ENCODE measurements at regions of chr5 and their contacts with region 1.

Region 1: GRCh38 chr5:149035372-149035790 is 27.5 kb downstream of the SH3TC2 start:
- DNase-seq: peak; percentile 70 to 82
- H3K4me3 ChIP-seq: no peak overlapping the region
- H3K4me3 Mint-ChIP-seq: no peak overlapping the region
- H3K27ac Mint-ChIP-seq: no peak overlapping the region
- H3K4me1 ChIP-seq: no peaks in the 10 kb centered on the region
- H3K4me1 Mint-ChIP-seq: no peaks in the 10 kb centered on the region
- H3K27me3 ChIP-seq: no peaks in the 10 kb centered on the region
- H3K27me3 Mint-ChIP-seq: peaks cover 3% of the 10 kb centered on the region
- CTCF ChIP-seq: peak; percentile 75 to 94

Region 2: DNA sequence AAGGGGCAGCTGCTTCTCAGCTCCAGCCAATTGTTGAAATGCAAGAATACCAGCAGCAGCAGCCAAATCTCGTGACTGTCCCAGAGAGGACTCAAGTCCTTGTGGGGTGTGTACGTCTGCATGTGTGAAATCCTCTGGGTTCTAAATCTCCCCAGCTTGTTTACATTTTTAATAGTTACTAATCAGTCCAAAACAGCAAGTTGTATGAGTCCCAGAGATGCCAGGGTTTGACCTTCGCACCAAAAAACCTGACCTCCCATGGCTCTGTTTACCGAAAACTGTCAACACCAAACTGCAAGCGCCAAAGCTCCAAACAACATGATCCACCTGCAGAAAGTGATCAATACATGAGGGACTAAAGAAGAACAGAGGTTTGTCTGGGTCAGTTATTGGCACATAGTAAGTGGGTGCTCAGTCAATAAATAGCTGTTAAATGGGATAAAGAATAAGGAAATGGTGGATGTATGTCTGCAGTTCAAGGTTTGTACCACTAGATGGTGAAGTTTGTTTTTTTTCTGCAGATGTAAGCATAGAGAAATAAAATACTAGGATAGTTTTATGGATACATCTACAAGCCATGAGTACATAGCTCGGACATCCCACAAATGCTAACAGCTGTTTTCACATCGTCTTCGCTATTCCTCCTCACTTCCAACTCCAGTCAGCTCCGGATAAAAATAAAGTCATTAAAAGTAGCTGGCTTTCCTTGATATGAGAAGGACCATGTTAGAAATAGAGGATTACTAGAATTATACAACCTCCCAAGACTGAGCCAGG is 294.2 kb before region 1 on chr5:
- CTCF ChIA-PET with region 1: interaction called, 19 read pairs
- POLR2A ChIA-PET with region 1: no interaction called
- intact Hi-C with region 1: loop called (anchors 1 kb)
- DNase-seq: peak in 1 of 2 experiments; percentile 45
- H3K4me3 ChIP-seq: no peak overlapping the region
- H3K4me3 Mint-ChIP-seq: no peak overlapping the region
- H3K27ac Mint-ChIP-seq: no peak overlapping the region
- H3K4me1 ChIP-seq: no peaks in the 10 kb centered on the region
- H3K4me1 Mint-ChIP-seq: no peaks in the 10 kb centered on the region
- H3K27me3 ChIP-seq: no peaks in the 10 kb centered on the region
- H3K27me3 Mint-ChIP-seq: peaks cover 11% of the 10 kb centered on the region
- CTCF ChIP-seq: peak; percentile 64 to 67

Region 3: DNA sequence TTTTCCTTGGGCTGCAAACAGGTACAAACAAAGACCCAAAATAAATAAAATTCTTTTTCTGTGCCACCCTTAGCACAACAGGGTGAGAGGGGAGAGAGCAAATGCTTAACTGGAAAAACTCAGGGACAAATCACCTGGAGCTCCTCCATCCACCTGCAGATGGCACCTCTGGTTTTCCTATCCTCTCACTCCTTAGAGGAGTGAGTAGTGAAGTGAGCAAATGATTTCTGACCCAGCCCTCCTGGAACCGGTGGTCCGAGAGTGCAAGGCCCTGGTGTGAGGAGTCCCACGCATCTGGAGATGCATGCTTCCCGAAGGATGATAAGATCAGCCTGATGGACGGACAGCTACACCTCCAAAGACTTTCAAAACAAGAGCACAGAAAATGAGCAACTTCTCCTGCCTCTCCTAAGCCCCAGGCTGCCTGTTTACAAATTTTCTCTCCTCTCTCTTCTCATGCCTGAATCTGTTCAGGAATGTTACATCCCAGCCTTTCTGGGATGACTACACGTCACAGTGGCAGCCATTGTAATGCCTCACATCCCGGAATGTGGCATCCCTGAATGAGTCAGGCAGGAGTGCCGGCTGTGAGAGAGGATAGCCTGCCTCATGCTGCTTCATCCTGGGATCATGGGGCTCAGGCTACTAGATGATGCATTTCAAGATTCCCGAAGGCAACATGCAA is 122.5 kb before region 1 on chr5:
- CTCF ChIA-PET with region 1: interaction called, 10 read pairs
- POLR2A ChIA-PET with region 1: no interaction called
- intact Hi-C with region 1: loop called (anchors 1 kb)
- DNase-seq: peak in 1 of 2 experiments; percentile 40
- H3K4me3 ChIP-seq: no peak overlapping the region
- H3K4me3 Mint-ChIP-seq: no peak overlapping the region
- H3K27ac Mint-ChIP-seq: peak overlapping the region; percentile 50
- H3K4me1 ChIP-seq: peaks cover 31% of the 10 kb centered on the region
- H3K4me1 Mint-ChIP-seq: peaks cover 6% of the 10 kb centered on the region
- H3K27me3 ChIP-seq: no peaks in the 10 kb centered on the region
- H3K27me3 Mint-ChIP-seq: peaks cover 3% of the 10 kb centered on the region
- CTCF ChIP-seq: peak; percentile 50 to 65

Region 4: GRCh38 chr5:148957591-148958202 is 77.7 kb before region 1 on chr5:
- CTCF ChIA-PET with region 1: interaction called, 11 read pairs
- POLR2A ChIA-PET with region 1: no interaction called
- intact Hi-C with region 1: loop called (anchors 2 kb)
- DNase-seq: peak; percentile 47 to 61
- H3K4me3 ChIP-seq: no peak overlapping the region
- H3K4me3 Mint-ChIP-seq: no peak overlapping the region
- H3K27ac Mint-ChIP-seq: no peak overlapping the region
- H3K4me1 ChIP-seq: peaks cover 6% of the 10 kb centered on the region; the same call in 1 of the 2 replicates
- H3K4me1 Mint-ChIP-seq: no peaks in the 10 kb centered on the region
- H3K27me3 ChIP-seq: no peaks in the 10 kb centered on the region
- H3K27me3 Mint-ChIP-seq: peaks cover 9% of the 10 kb centered on the region
- CTCF ChIP-seq: peak; percentile 87 to 88

Region 5: DNA sequence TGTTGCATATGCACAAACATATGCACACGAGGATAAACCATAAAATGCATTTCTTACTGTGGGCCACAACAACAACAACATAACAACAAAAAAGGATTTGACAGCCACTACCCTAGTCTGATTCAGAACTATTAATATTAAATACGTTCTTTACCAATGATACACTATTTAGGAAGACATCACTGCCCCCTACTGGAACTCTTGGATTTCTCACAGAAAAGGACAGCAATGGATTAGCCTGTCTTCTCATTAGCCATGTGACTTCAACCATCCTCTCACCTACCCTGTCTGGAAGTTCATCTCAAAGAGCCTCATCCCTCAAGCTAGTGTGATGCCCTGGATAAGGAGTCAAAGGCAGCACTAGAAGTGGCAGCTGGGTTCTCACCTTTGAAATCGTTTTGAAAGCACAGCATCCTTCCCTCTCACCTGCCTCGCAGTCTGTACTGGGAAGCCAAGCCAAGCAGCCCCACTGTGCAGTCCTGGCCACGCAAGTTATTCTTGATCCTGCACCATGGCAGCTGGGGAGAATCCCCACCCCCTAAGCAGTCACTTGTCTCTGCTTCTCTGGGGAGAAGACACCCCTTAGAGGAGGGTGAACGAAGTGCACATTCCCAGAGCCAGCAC is 37.1 kb before region 1 on chr5:
- CTCF ChIA-PET with region 1: interaction called, 5 read pairs
- POLR2A ChIA-PET with region 1: no interaction called
- intact Hi-C with region 1: loop called (anchors 1 kb)
- DNase-seq: peak in 1 of 2 experiments; percentile 36
- H3K4me3 ChIP-seq: no peak overlapping the region
- H3K4me3 Mint-ChIP-seq: no peak overlapping the region
- H3K27ac Mint-ChIP-seq: no peak overlapping the region
- H3K4me1 ChIP-seq: peaks cover 22% of the 10 kb centered on the region
- H3K4me1 Mint-ChIP-seq: peaks cover 9% of the 10 kb centered on the region
- H3K27me3 ChIP-seq: no peaks in the 10 kb centered on the region
- H3K27me3 Mint-ChIP-seq: no peaks in the 10 kb centered on the region
- CTCF ChIP-seq: peak; percentile 53

Region 6: GRCh38 chr5:149371296-149371962 is 336.0 kb after region 1 on chr5:
- CTCF ChIA-PET with region 1: no interaction called
- POLR2A ChIA-PET with region 1: no interaction called
- intact Hi-C with region 1: no loop called
- DNase-seq: peak; percentile 77 to 79
- H3K4me3 ChIP-seq: no peak overlapping the region
- H3K4me3 Mint-ChIP-seq: no peak overlapping the region
- H3K27ac Mint-ChIP-seq: no peak overlapping the region
- H3K4me1 ChIP-seq: peaks cover 4% of the 10 kb centered on the region; the same call in 1 of the 2 replicates
- H3K4me1 Mint-ChIP-seq: no peaks in the 10 kb centered on the region
- H3K27me3 ChIP-seq: no peaks in the 10 kb centered on the region
- H3K27me3 Mint-ChIP-seq: no peaks in the 10 kb centered on the region
- CTCF ChIP-seq: peak; percentile 85 to 90

Region 7: GRCh38 chr5:149790276-149790675 is 754.9 kb after region 1 on chr5:
- CTCF ChIA-PET with region 1: no interaction called
- POLR2A ChIA-PET with region 1: no interaction called
- intact Hi-C with region 1: no loop called
- DNase-seq: no peak
- H3K4me3 ChIP-seq: no peak overlapping the region
- H3K4me3 Mint-ChIP-seq: no peak overlapping the region
- H3K27ac Mint-ChIP-seq: no peak overlapping the region
- H3K4me1 ChIP-seq: no peaks in the 10 kb centered on the region
- H3K4me1 Mint-ChIP-seq: no peaks in the 10 kb centered on the region
- H3K27me3 ChIP-seq: no peaks in the 10 kb centered on the region
- H3K27me3 Mint-ChIP-seq: no peaks in the 10 kb centered on the region
- CTCF ChIP-seq: no peak